GM12878 (cell line): ENCODE measurements at regions of chr3 and their contacts with region 1.

Region 1: GRCh38 chr3:169966428-169966950 is at the start of gene SEC62:
- DNase-seq: peak; percentile 65
- ATAC-seq: peak; percentile 89
- H3K4me3 ChIP-seq: peak within 1 kb of the TSS; percentile 79
- H3K27ac ChIP-seq: peak within 1 kb of the TSS; percentile 91
- H3K4me1 ChIP-seq: peaks cover 7% of the 10 kb centered on the region; the same call in 1 of the 2 replicates
- H3K27me3 ChIP-seq: no peaks in the 10 kb centered on the region
- CTCF ChIP-seq: peak; percentile 57 to 75 (median 64)
- EP300 ChIP-seq: no peak; a peak in 1 of 4 replicates
- POLR2A ChIP-seq: peak; percentile 95
- RAD21 ChIP-seq: peak; percentile 74
- polyA plus RNA-seq, gene SEC62: 252 to 270 TPM

Region 2: DNA sequence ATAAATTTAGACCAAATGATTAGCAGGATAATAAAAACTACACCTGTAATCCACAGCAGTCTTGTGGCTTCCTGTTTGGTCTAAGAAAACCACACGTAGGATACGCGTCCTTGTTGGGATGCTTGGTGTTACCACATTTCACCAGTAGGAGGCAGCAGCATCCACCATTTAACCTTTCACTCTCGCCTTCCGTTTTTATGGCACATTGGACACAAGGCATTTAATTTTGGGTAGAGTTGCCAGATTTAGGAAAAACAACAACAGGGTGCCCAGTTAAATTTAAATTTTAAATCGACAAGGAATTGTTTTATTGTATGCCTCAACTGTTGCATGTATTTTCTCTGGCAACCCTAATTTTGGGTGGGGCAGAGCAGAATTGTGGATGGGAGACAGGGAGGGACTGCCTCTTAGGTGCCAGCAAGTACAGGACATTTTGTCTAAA is 103.0 kb before region 1 on chr3:
- CTCF ChIA-PET with region 1: interaction called, 18 read pairs
- POLR2A ChIA-PET with region 1: interaction called, 4 read pairs
- RAD21 ChIA-PET with region 1: interaction called, 17 read pairs
- SMC1A ChIA-PET with region 1: interaction called, 56 read pairs
- in situ Hi-C with region 1: no loop called
- intact Hi-C with region 1: loop called (anchors 1 kb)
- DNase-seq: peak; percentile 61
- ATAC-seq: peak; percentile 81
- H3K4me3 ChIP-seq: no peak overlapping the region
- H3K27ac ChIP-seq: no peak overlapping the region
- H3K4me1 ChIP-seq: peaks cover 16% of the 10 kb centered on the region
- H3K27me3 ChIP-seq: no peaks in the 10 kb centered on the region; a peak in 1 of 4 replicates
- CTCF ChIP-seq: peak; percentile 93 to 96 (median 93); a peak in 5 of 6 replicates
- EP300 ChIP-seq: no peak
- POLR2A ChIP-seq: no peak
- RAD21 ChIP-seq: peak; percentile 99

Region 3: DNA sequence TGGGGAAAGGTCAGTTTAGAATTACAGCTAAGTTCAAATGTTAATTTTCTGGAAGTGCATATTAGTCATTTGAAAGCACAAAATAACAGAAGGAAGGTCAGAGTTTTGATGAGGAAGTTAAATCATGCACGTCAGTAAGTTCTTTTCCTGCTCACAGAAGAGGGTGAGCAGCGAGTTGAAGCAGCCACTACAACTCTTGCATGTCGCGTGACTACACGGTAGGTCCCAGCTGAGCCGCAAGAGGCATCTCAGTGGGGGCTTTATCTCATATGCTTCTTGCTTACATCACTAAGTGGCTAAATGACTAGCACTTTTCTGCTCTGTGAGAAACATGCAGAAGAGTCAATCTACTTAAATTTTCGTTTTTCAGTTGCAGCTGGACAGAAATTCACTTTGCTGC is 21.2 kb before region 1 on chr3:
- CTCF ChIA-PET with region 1: interaction called, 35 read pairs
- POLR2A ChIA-PET with region 1: interaction called, 34 read pairs
- RAD21 ChIA-PET with region 1: interaction called, 123 read pairs
- SMC1A ChIA-PET with region 1: interaction called, 174 read pairs
- in situ Hi-C with region 1: no loop called
- intact Hi-C with region 1: loop called (anchors 1 kb)
- DNase-seq: peak; percentile 85
- ATAC-seq: peak; percentile 91
- H3K4me3 ChIP-seq: peak overlapping the region; percentile 48; the same call in 1 of the 2 replicates
- H3K27ac ChIP-seq: peak overlapping the region; percentile 93
- H3K4me1 ChIP-seq: peaks cover 62% of the 10 kb centered on the region
- H3K27me3 ChIP-seq: no peaks in the 10 kb centered on the region
- CTCF ChIP-seq: peak in 1 of 3 experiments; percentile 8; a peak in 1 of 6 replicates
- EP300 ChIP-seq: peak; percentile 98 to 99
- POLR2A ChIP-seq: peak; percentile 45; the same call in 1 of the 2 replicates
- RAD21 ChIP-seq: 0 out of 2 replicates have a peak, but pooled peaks have one; percentile 13

Region 4: GRCh38 chr3:169954142-169954756 is 12.2 kb before region 1 on chr3:
- CTCF ChIA-PET with region 1: interaction called, 35 read pairs
- POLR2A ChIA-PET with region 1: interaction called, 37 read pairs
- RAD21 ChIA-PET with region 1: interaction called, 123 read pairs
- SMC1A ChIA-PET with region 1: interaction called, 174 read pairs
- in situ Hi-C with region 1: no loop called
- intact Hi-C with region 1: no loop called
- DNase-seq: peak; percentile 38
- ATAC-seq: peak; percentile 92
- H3K4me3 ChIP-seq: peak overlapping the region; percentile 37
- H3K27ac ChIP-seq: peak overlapping the region; percentile 95
- H3K4me1 ChIP-seq: peaks cover 28% of the 10 kb centered on the region
- H3K27me3 ChIP-seq: no peaks in the 10 kb centered on the region
- CTCF ChIP-seq: no peak
- EP300 ChIP-seq: peak; percentile 14 to 49; a peak in 1 of 4 replicates
- POLR2A ChIP-seq: 0 out of 2 replicates have a peak, but pooled peaks have one; percentile 30
- RAD21 ChIP-seq: peak; percentile 15; the same call in 1 of the 2 replicates

Region 5: DNA sequence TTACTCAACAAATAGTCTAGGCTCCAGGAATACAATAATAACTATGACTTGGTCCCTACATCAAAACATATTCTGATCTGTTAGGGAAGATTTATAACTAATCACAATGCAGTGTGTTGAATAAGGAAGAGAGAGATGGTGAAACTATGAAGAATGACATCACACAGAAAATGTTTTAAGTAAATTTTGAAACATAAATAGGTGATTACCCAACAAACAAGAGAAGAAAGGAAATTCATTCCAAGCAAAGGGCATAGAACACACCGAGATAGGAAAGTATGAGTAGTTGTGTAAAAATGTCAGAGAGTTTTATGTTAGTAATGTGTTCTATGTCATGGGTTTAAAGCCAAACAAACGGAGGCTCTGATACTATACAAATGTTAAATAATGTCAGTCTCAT is 13.6 kb after region 1 on chr3:
- CTCF ChIA-PET with region 1: interaction called, 21 read pairs
- POLR2A ChIA-PET with region 1: interaction called, 6 read pairs
- RAD21 ChIA-PET with region 1: no interaction called
- SMC1A ChIA-PET with region 1: interaction called, 26 read pairs
- in situ Hi-C with region 1: no loop called
- intact Hi-C with region 1: no loop called
- DNase-seq: no peak
- ATAC-seq: no peak
- H3K4me3 ChIP-seq: no peak overlapping the region
- H3K27ac ChIP-seq: no peak overlapping the region
- H3K4me1 ChIP-seq: peaks cover 6% of the 10 kb centered on the region
- H3K27me3 ChIP-seq: no peaks in the 10 kb centered on the region
- CTCF ChIP-seq: no peak
- EP300 ChIP-seq: no peak
- POLR2A ChIP-seq: no peak
- RAD21 ChIP-seq: no peak